Ascending aorta (tissue), 2 donors: ENCODE measurements at regions of chr9 and their contacts with region 1.

Region 1: GRCh38 chr9:137295238-137295811 is 6.7 kb downstream of the NRARP start:
- DNase-seq: no peak
- H3K4me3 ChIP-seq: peak overlapping the region; percentile 44 to 57
- H3K27ac ChIP-seq: no peak overlapping the region
- H3K4me1 ChIP-seq: peaks cover 5 to 8% of the 10 kb centered on the region in 2 donors
- H3K27me3 ChIP-seq: peaks cover 27% of the 10 kb centered on the region
- CTCF ChIP-seq: peak in 1 of 3 experiments; percentile 86

Region 2: GRCh38 chr9:137269231-137269772 is 26.0 kb before region 1 on chr9:
- intact Hi-C with region 1: no loop called
- DNase-seq: peak; percentile 36 to 84
- H3K4me3 ChIP-seq: peak overlapping the region; percentile 25 to 29
- H3K27ac ChIP-seq: peak overlapping the region; percentile 66 to 83
- H3K4me1 ChIP-seq: peaks cover 10 to 23% of the 10 kb centered on the region in 2 donors
- H3K27me3 ChIP-seq: no peaks in the 10 kb centered on the region
- CTCF ChIP-seq: no peak

Region 3: GRCh38 chr9:137406876-137407589 is 111.7 kb after region 1 on chr9:
- intact Hi-C with region 1: loop called (anchors 2 kb)
- DNase-seq: peak in 1 of 2 donors; percentile 76
- H3K4me3 ChIP-seq: peak overlapping the region; percentile 50 to 66
- H3K27ac ChIP-seq: peak overlapping the region in 1 of 2 donors; percentile 24
- H3K4me1 ChIP-seq: peaks cover 14 to 23% of the 10 kb centered on the region in 2 donors
- H3K27me3 ChIP-seq: no peaks in the 10 kb centered on the region
- CTCF ChIP-seq: peak; percentile 54 to 89 (median 84)